Activated CD4-positive, alpha-beta memory T cell treated with anti-CD3 and anti-CD28 coated beads, Interleukin-2, amount 10 ng/mL, durations not matched to agents 7 days and 5 days (primary cell): ENCODE measurements at regions of chr17 and their contacts with region 1.

Region 1: DNA sequence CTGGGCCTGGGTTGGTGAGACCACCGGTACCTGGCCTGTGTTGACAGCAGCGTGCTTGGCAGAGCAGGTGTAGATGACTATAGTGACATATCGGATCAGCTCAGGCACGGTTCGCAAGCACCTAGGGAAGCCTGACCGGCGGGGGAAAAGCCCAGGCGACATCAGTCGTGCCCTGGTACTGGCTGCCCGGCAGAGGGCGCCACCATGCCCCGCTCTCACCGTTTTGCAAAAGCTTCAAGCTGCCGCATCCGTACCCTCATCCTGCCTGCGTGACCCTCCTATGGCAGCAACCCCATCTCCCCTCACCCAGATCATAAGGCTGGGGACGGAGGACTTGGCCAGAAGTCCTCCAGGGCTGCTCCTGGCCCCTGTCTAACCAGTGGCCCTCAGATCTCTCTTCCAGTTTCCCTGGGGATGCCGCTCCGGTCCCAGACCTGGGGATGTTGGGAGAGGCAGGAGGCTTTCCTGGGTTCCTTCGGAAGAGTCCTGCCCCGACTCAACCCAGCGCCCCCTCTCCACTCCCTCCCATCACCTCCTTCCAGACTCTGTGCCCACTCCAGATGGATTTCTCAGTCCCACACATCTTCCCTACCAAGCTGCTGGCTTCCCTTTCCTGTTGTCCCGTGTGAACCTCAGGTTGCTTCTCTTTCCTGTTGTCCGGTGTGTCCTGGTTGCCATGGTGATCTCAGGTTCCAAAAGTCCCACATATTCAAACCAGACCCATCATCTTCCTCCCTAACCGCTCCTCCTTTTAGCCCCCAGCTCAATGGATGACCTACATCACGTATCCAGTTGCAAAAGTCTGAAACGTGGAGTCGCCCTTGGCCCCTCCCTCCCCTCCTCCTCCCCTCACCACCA is 13.7 kb downstream of the ALOX12B start:
- DNase-seq: peak; percentile 84
- H3K4me3 Mint-ChIP-seq: peak overlapping the region; percentile 53
- H3K27ac Mint-ChIP-seq: no peak overlapping the region
- H3K4me1 Mint-ChIP-seq: peaks cover 27% of the 10 kb centered on the region
- H3K27me3 Mint-ChIP-seq: peaks cover 62% of the 10 kb centered on the region

Region 2: DNA sequence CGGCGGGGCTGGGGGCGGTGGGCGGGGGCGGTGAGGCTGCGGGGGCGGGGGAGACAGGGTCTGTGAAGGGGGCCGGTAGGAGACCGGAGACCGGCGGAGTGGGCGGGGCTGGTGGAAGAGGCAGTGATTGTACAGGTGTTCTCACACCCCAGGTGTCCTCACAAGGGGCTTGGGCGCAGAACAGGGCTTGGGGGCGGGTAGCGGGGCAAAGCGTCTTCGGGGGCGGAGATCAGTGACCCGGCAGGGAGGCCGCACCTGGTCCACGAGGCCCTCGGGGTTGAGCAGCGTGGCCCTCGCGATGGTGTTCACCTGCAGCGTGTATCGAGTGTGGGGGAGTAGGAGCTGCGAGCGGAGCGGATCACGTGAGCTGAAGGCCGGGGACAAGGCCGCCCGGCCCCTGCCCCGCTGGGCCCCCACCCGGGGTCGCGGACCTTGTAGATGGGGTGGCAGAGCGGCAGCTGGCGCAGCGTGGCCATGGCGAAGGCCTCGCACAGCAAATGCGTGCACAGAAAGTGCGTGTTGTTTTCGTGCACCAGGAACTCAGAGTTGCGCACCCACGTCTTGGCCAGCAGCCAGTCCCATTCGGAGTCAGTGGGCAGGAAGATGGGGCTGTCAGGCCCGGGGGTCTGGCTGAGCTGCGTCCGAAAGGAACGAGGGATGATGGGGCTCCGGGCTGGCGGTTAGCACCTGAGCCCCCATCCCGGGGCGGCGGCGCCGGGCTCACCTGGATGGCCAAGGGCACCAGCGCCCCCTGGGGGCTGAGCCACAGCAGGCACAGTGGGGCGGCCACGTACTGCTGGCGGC is 36.0 kb after region 1 on chr17:
- CTCF ChIA-PET with region 1: interaction called, 14 read pairs
- POLR2A ChIA-PET with region 1: interaction called, 6 read pairs
- DNase-seq: peak; percentile 80
- H3K4me3 Mint-ChIP-seq: peak overlapping the region; percentile 37
- H3K27ac Mint-ChIP-seq: no peak overlapping the region
- H3K4me1 Mint-ChIP-seq: peaks cover 16% of the 10 kb centered on the region
- H3K27me3 Mint-ChIP-seq: peaks cover 34% of the 10 kb centered on the region